ENCODE measurements at regions of chr6 and their contacts with region 1.

Region 1: DNA sequence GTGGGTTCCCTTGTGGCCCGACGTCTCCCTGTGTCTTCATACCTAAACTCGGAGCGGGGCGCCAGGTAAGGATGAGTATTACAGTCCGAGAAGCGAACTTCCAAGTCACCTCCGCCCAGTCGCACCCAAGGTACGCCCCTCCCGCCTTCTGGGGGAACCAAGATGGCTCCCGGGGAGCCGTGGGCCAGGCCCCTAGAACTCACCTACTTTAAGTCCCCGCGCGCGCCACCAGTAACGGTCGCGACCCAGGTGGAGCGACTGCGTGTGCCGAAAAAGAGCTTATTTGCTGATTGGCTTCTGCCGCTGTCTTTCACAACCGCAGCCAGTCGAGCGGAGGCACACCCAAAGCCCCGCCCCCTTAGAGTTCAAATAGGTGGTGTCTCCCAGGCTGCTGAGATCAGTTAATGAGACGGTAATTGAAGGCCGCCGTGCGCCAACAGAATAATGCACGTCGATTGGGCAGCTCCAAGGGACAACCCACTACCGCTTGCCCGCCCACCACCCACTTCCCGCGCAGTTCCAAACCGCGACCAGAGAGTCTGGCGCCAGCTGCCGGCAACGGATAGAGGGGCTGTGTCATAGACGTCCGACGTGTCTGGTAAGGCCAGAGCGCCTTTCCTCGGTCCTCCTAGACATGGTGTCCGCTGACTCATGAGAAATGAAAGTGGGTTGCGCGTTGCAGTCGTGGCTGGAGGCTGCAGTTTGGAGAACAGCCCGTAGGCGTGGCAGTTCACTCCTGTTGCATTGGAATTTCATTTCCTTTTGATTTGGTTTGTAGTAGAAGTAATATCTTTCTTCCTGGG is at the start of gene MDC1:
- DNase-seq: peak; percentile 100
- H3K4me3 Mint-ChIP-seq: peak within 1 kb of the TSS; percentile 95
- H3K27ac Mint-ChIP-seq: peak within 1 kb of the TSS; percentile 98
- H3K4me1 Mint-ChIP-seq: peaks cover 44% of the 10 kb centered on the region
- H3K27me3 Mint-ChIP-seq: no peaks in the 10 kb centered on the region
- total RNA-seq, gene MDC1: 88.3 and 96.6 TPM in 2 replicates

Region 2: DNA sequence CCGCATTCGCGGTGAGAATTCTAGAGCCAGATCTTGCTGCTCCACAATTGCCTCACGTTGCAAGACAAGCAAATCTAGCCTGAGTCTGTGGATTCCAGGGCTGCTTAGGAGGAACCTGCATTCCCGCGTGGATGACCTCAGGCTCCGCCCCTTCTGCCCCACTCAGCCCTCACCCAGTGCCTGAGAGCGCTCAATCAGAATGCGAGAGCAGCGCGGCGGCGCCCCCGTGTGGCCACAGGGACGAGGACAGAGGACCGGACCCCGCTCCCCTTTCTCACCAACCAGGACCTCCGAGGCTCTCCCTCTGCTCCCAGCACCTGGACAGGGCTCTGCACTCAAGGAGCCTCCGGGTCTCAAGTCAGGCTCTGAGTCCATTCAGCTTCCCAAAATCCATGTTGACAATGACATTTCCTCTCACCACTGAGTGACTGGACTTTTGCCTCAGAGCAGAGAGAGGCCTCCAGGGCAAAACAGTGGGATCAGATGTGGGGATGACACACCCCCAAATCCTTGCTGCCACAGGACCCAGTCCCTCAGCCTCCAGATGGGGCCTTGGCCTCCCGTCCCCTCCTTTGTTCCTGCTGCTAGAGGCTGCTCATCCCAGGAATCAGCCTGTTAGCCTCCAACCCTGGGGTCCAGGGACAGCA is 320.3 kb before region 1 on chr6:
- intact Hi-C with region 1: no loop called
- DNase-seq: peak; percentile 73
- H3K4me3 Mint-ChIP-seq: no peak overlapping the region
- H3K27ac Mint-ChIP-seq: no peak overlapping the region
- H3K4me1 Mint-ChIP-seq: peaks cover 4% of the 10 kb centered on the region
- H3K27me3 Mint-ChIP-seq: peaks cover 53% of the 10 kb centered on the region

Region 3: GRCh38 chr6:30556066-30556905 is 161.0 kb before region 1 on chr6 and contains the start of gene GNL1:
- intact Hi-C with region 1: loop called (anchors 1 kb)
- DNase-seq: peak; percentile 96
- H3K4me3 Mint-ChIP-seq: peak within 1 kb of the TSS; percentile 98
- H3K27ac Mint-ChIP-seq: peak within 1 kb of the TSS; percentile 100
- H3K4me1 Mint-ChIP-seq: peaks cover 22% of the 10 kb centered on the region
- H3K27me3 Mint-ChIP-seq: no peaks in the 10 kb centered on the region
- total RNA-seq, gene GNL1: 79.8 and 88.2 TPM in 2 replicates

Region 4: GRCh38 chr6:30616811-30617564 is 100.3 kb before region 1 on chr6 and contains the start of gene PPP1R10:
- intact Hi-C with region 1: loop called (anchors 1 kb)
- DNase-seq: peak; percentile 99
- H3K4me3 Mint-ChIP-seq: peak within 1 kb of the TSS; percentile 96
- H3K27ac Mint-ChIP-seq: peak within 1 kb of the TSS; percentile 98
- H3K4me1 Mint-ChIP-seq: peaks cover 29% of the 10 kb centered on the region
- H3K27me3 Mint-ChIP-seq: peaks cover 3% of the 10 kb centered on the region
- total RNA-seq, gene PPP1R10: 96.7 and 102 TPM in 2 replicates

Region 5: DNA sequence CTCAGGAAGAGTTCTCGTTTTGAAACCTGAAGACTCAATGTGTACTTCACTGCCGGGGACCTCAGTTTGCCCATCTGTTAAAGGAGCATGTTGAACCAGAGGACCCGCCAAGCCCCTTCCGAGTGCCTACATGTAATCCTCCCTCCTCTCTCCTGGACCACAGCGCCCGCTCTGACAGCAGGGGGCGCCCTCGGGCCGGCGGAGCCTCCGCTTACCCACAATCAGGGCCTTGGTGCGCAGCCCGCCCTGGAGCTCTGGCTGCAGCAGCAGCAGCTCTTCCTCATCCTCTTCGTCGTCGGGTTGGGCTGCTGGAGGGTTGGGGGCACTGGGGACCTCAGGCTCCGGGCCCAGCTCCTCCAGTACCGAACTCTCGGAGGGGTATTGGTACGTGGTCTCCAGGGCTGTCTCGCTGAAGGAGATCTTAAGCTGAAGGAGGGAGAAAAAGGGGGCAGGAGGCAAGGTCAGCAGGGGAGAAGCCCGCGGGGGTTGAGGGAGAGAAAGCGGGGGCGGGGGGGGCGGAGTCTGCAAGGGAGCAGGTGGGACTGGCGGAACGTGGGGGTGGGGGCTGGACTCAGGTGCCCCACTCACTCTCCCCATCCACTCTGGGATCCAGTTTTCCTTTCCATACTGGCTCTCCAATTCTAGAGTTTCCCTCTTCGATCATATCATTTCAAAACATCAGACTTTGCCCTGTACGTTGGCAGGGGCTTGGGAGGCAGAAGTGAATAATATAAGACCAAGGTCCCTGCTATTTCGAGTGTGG is 38.1 kb before region 1 on chr6:
- intact Hi-C with region 1: loop called (anchors 1 kb)
- DNase-seq: peak; percentile 86
- H3K4me3 Mint-ChIP-seq: peak overlapping the region; percentile 97
- H3K27ac Mint-ChIP-seq: peak overlapping the region; percentile 75
- H3K4me1 Mint-ChIP-seq: peaks cover 26% of the 10 kb centered on the region
- H3K27me3 Mint-ChIP-seq: no peaks in the 10 kb centered on the region

Region 6: DNA sequence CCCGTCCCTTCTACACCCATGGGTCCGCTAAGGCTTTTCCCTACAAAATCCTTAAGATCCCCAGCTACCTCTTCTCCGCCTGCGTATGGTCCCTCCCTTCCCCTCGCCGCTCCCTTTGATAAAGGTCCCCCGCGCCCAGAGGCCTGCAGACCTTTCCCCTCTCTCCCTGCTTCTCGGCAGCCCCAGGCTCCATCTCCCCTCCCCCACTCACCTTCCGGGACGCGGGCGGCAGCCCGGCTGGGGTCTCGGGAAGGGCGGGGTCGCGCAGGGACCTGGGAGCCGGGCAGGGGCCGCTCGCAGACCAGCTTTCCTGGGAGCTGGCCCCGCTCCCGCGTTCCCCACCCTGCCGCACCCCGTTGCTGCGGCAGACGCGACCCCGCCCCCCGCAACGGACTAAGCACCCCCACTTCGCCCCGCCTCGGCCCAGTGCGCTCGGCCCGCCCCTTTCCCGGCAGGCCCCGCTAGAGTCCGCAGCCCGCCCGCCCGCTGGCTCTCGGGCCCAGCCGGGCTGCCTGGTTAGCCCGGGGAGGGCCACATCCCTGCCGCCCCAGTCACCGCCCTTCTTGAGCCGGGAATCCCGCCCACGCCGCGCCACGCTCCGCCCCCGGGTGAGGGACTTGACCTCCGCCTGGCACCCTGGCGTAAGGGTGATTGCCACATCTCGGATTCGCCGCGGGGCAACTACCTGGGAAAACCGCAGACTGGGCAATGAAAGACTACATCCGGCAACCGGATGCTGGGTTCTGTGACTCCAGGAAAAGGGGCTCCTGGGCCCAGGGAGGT is 25.3 kb after region 1 on chr6 and contains the start of gene FLOT1:
- intact Hi-C with region 1: loop called (anchors 1 kb)
- DNase-seq: peak; percentile 88
- H3K4me3 Mint-ChIP-seq: peak within 1 kb of the TSS; percentile 99
- H3K27ac Mint-ChIP-seq: peak within 1 kb of the TSS; percentile 91
- H3K4me1 Mint-ChIP-seq: peaks cover 50% of the 10 kb centered on the region
- H3K27me3 Mint-ChIP-seq: no peaks in the 10 kb centered on the region
- total RNA-seq, gene FLOT1: 201 and 214 TPM in 2 replicates

Region 7: GRCh38 chr6:30769088-30769852 is 52.0 kb after region 1 on chr6:
- intact Hi-C with region 1: no loop called
- DNase-seq: peak; percentile 68
- H3K4me3 Mint-ChIP-seq: peak overlapping the region; percentile 66
- H3K27ac Mint-ChIP-seq: peak overlapping the region; percentile 98
- H3K4me1 Mint-ChIP-seq: peaks cover 68% of the 10 kb centered on the region
- H3K27me3 Mint-ChIP-seq: no peaks in the 10 kb centered on the region